ENCODE measurements at regions of chr5 and their contacts with region 1.

Region 1: GRCh38 chr5:14270209-14270702 is 127.1 kb downstream of the TRIO start:
- DNase-seq: peak in 1 of 2 donors; percentile 49
- ATAC-seq: peak in 2 of 3 donors; percentile 76 to 89
- H3K4me3 ChIP-seq: no peak overlapping the region
- H3K4me3 Mint-ChIP-seq: no peak overlapping the region
- H3K27ac ChIP-seq: no peak overlapping the region
- H3K27ac Mint-ChIP-seq: no peak overlapping the region
- H3K4me1 ChIP-seq: no peaks in the 10 kb centered on the region
- H3K4me1 Mint-ChIP-seq: peaks cover 0 to 13% of the 10 kb centered on the region in 2 donors
- H3K27me3 ChIP-seq: no peaks in the 10 kb centered on the region
- H3K27me3 Mint-ChIP-seq: no peaks in the 10 kb centered on the region
- CTCF ChIP-seq: peak; percentile 83

Region 2: GRCh38 chr5:13987843-13988464 is 282.3 kb before region 1 on chr5:
- intact Hi-C with region 1: loop called (anchors 1 kb)
- DNase-seq: peak in 1 of 2 donors; percentile 19
- ATAC-seq: peak in 2 of 3 donors; percentile 38 to 46
- H3K4me3 ChIP-seq: no peak overlapping the region
- H3K4me3 Mint-ChIP-seq: no peak overlapping the region
- H3K27ac ChIP-seq: no peak overlapping the region
- H3K27ac Mint-ChIP-seq: no peak overlapping the region
- H3K4me1 ChIP-seq: no peaks in the 10 kb centered on the region
- H3K4me1 Mint-ChIP-seq: no peaks in the 10 kb centered on the region
- H3K27me3 ChIP-seq: no peaks in the 10 kb centered on the region
- H3K27me3 Mint-ChIP-seq: peaks cover 0 to 6% of the 10 kb centered on the region in 2 donors
- CTCF ChIP-seq: peak; percentile 58

Region 3: DNA sequence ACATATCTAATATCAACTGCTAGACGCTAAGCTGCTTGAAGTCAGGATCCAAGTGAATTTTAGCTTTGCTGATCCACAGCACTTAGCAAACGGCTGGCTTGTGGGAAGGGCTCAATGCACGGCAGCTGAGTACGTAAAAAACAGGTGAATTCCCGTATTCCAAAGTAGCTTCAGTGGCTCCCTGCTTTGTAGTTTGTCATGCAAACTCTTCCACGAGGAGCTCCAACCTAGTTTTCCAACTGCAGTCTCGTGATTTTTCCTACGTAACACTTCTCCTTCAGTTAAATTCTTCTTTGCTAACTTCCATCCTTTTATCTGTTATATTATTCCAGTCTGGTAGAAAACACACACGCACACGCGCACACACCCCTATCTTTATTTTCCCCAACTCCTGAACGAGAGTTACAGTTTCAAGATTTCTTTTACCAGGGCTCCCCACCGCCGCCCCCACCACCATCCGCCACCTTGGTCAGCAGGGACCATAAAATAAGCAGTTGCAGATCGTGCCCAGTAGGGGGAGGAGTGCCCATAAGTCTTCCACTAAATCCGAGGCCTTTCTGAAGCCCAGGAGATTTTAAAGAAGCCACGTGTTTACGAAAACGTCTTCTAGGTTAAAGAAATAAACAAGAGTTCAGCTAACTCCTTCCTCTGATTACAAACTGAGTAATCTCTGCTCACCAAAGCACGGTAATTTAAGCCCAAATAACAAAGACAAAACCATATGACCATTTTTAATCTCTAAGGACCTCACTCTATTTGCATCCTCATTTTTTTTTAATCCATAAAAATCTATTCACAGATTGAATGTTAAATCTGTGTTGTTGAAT is 161.9 kb before region 1 on chr5:
- intact Hi-C with region 1: loop called (anchors 1 kb)
- DNase-seq: peak; percentile 30 to 67
- ATAC-seq: peak; percentile 72 to 85 (median 74)
- H3K4me3 ChIP-seq: no peak overlapping the region
- H3K4me3 Mint-ChIP-seq: no peak overlapping the region
- H3K27ac ChIP-seq: no peak overlapping the region
- H3K27ac Mint-ChIP-seq: peak overlapping the region; percentile 1 to 83
- H3K4me1 ChIP-seq: no peaks in the 10 kb centered on the region
- H3K4me1 Mint-ChIP-seq: peaks cover 19 to 21% of the 10 kb centered on the region in 2 donors
- H3K27me3 ChIP-seq: no peaks in the 10 kb centered on the region
- H3K27me3 Mint-ChIP-seq: peaks cover 14 to 39% of the 10 kb centered on the region in 2 donors
- CTCF ChIP-seq: peak; percentile 73